ENCODE measurements at regions of chr3 and their contacts with region 1.

Region 1: DNA sequence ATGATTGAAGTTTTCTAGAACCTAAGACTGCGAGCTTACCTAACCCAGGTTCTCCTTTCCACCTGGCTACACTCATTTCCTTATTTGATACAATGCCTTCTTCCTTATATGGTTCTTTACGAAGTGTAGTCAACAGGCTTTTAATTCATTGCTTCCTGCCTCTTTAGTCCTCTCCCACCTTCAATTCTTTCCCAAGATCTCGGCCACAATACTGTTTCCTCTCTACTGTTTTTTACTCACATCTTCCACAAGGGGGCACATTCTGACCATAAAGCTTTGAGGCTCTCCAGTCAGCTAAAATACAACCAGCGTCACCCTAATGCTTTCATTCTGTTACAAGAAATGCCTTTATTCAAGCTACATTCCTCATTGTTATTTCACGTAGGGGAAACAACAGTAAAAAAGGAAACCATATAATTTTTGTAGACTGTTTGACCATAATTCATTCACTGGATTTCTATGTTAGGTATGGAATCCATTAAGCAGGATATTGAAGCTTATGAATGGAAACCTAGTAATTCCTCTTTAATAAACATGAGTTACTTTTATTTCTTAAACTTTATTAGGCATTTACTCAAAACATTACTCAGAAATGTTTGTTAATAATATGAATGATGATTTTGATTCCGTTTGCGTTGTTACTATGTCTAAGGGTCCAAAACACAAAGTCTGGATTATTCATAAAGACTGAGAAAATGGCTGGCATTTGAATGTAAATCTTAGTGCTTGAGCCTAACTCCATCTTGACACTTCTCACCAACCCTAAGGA is 29.5 kb upstream of the VEPH1 start:
- DNase-seq: peak; percentile 26
- ATAC-seq: peak; percentile 53
- H3K4me3 Mint-ChIP-seq: no peak overlapping the region
- H3K27ac Mint-ChIP-seq: no peak overlapping the region
- H3K4me1 Mint-ChIP-seq: no peaks in the 10 kb centered on the region
- H3K27me3 Mint-ChIP-seq: peaks cover 3% of the 10 kb centered on the region

Region 2: DNA sequence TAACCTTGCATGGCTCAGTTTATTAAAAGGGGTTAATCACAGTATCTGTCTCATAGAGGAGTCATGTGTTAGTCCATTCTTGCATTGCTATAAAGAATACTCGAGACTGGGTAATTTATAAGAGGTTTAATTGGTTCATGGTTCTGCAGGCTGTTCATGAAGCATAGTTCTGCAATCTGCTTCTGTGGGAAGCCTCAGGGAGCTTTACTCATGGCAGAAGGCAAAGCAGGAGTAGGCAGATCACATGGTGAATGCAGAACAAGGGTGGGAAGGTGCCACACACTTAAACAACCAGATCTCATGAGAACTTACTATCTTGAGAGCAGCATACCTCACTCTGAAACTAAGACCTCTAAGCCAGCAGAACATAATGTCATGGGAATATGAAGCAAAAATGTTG is 138.3 kb before region 1 on chr3:
- CTCF ChIA-PET with region 1: no interaction called
- POLR2A ChIA-PET with region 1: no interaction called
- DNase-seq: no peak
- ATAC-seq: no peak
- H3K4me3 Mint-ChIP-seq: no peak overlapping the region
- H3K27ac Mint-ChIP-seq: no peak overlapping the region
- H3K4me1 Mint-ChIP-seq: no peaks in the 10 kb centered on the region
- H3K27me3 Mint-ChIP-seq: no peaks in the 10 kb centered on the region

Region 3: GRCh38 chr3:157572559-157573270 is 40.0 kb after region 1 on chr3:
- CTCF ChIA-PET with region 1: interaction called, 77 read pairs
- POLR2A ChIA-PET with region 1: no interaction called
- DNase-seq: peak; percentile 40
- ATAC-seq: no peak
- H3K4me3 Mint-ChIP-seq: no peak overlapping the region
- H3K27ac Mint-ChIP-seq: no peak overlapping the region
- H3K4me1 Mint-ChIP-seq: no peaks in the 10 kb centered on the region
- H3K27me3 Mint-ChIP-seq: peaks cover 5% of the 10 kb centered on the region

Region 4: GRCh38 chr3:157948605-157949383 is 416.1 kb after region 1 on chr3:
- CTCF ChIA-PET with region 1: no interaction called
- POLR2A ChIA-PET with region 1: no interaction called
- DNase-seq: no peak
- ATAC-seq: no peak
- H3K4me3 Mint-ChIP-seq: no peak overlapping the region
- H3K27ac Mint-ChIP-seq: no peak overlapping the region
- H3K4me1 Mint-ChIP-seq: no peaks in the 10 kb centered on the region
- H3K27me3 Mint-ChIP-seq: no peaks in the 10 kb centered on the region

Measured in activated CD8-positive, alpha-beta T cell treated with anti-CD3 and anti-CD28 coated beads, Interleukin-2, amount 10 ng/mL, durations not matched to agents 7 days and 5 days (primary cell).